GM12878 (cell line): ENCODE measurements at regions of chr14 and their contacts with region 1.

Region 1: DNA sequence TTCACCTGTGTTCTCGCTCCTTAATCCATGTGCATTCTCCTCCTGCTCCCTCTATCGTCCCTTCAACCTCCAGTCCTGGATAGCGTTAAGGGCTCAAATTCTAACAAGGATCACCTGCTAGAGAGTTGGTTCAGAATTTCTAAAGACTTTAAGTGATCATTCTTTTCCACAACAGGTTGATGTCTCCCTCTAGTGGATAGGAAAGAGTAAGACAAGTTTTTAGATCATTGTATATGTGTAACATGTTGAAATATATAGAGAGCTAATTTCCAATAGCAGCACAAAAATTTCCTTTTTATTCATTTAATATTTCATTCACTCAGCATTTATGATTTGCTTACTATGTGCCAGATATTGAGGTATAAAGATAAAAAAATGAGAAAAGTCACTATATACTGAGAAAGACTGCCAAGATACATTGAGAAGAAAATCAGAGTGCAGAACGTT is 9.3 kb upstream of the ESR2 start:
- DNase-seq: peak; percentile 28
- ATAC-seq: peak; percentile 93
- H3K4me3 ChIP-seq: no peak overlapping the region
- H3K27ac ChIP-seq: no peak overlapping the region
- H3K4me1 ChIP-seq: no peaks in the 10 kb centered on the region
- H3K27me3 ChIP-seq: no peaks in the 10 kb centered on the region
- CTCF ChIP-seq: peak; percentile 66 to 72 (median 67)
- EP300 ChIP-seq: no peak
- POLR2A ChIP-seq: no peak
- RAD21 ChIP-seq: peak; percentile 88

Region 2: GRCh38 chr14:63795532-63795931 is 508.0 kb before region 1 on chr14:
- CTCF ChIA-PET with region 1: interaction called, 74 read pairs
- POLR2A ChIA-PET with region 1: interaction called, 3 read pairs
- RAD21 ChIA-PET with region 1: interaction called, 13 read pairs
- SMC1A ChIA-PET with region 1: interaction called, 22 read pairs
- in situ Hi-C with region 1: loop called (anchors 5 kb)
- intact Hi-C with region 1: loop called (anchors 2 kb)
- DNase-seq: no peak
- ATAC-seq: peak; percentile 87
- H3K4me3 ChIP-seq: no peak overlapping the region
- H3K27ac ChIP-seq: no peak overlapping the region
- H3K4me1 ChIP-seq: no peaks in the 10 kb centered on the region
- H3K27me3 ChIP-seq: no peaks in the 10 kb centered on the region
- CTCF ChIP-seq: no peak
- EP300 ChIP-seq: peak in 1 of 2 experiments; percentile 30; a peak in 1 of 4 replicates
- POLR2A ChIP-seq: no peak
- RAD21 ChIP-seq: no peak

Region 3: DNA sequence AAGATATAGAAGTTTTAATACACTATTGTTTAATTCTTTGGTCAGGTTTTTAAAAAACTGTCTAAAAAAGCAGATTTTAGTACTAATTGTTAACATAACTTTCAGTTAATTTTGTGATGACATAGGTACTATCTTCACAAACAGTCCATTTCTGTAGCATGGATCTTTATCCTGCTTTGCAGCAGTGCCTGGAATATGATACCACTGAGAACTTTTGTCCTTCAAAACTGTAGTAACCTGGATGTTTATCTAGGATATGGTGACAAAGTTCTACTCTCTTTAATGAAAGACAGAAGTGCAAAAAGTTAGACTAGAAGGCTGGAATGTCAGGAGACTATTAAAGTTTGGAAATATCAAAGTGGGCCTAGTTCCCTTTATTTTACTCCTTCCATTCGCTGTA is 290.8 kb before region 1 on chr14:
- CTCF ChIA-PET with region 1: interaction called, 45 read pairs
- POLR2A ChIA-PET with region 1: no interaction called
- RAD21 ChIA-PET with region 1: interaction called, 34 read pairs
- SMC1A ChIA-PET with region 1: interaction called, 19 read pairs
- in situ Hi-C with region 1: no loop called
- intact Hi-C with region 1: loop called (anchors 5 kb)
- DNase-seq: no peak
- ATAC-seq: no peak
- H3K4me3 ChIP-seq: no peak overlapping the region
- H3K27ac ChIP-seq: no peak overlapping the region
- H3K4me1 ChIP-seq: no peaks in the 10 kb centered on the region
- H3K27me3 ChIP-seq: no peaks in the 10 kb centered on the region
- CTCF ChIP-seq: no peak
- EP300 ChIP-seq: no peak
- POLR2A ChIP-seq: no peak
- RAD21 ChIP-seq: no peak

Region 4: DNA sequence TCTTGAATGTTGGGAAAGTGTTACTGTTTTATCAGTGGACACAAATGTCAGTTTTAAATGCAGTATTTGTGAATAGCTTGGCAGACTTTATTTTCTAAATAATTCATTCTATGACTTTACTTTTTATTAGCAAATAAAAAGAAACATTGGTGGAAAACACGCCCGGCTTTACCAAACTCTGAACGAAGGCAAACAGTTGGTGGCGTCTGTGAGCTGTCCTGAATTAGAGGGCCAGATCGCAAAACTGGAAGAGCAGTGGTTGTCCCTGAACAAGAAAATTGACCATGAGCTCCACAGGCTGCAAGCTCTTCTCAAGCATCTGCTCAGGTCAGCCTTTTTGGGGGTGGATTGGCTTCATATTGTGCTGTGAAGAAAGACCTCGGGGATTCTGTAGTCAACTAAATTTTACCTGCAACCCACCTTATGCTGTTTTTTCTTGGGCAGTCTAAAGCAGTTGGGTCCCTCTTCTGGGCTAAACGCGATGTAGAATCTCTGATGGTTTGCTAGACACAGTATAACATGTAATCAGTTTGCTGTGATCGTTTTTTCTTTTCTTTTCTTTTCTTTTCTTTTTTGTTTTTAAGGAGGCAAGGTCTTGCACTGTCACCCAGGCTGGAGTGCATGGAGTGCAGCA is 165.7 kb before region 1 on chr14:
- CTCF ChIA-PET with region 1: interaction called, 93 read pairs
- POLR2A ChIA-PET with region 1: no interaction called
- RAD21 ChIA-PET with region 1: interaction called, 31 read pairs
- SMC1A ChIA-PET with region 1: interaction called, 24 read pairs
- in situ Hi-C with region 1: no loop called
- intact Hi-C with region 1: no loop called
- DNase-seq: no peak
- ATAC-seq: peak; percentile 36; the same call in 1 of the 3 replicates
- H3K4me3 ChIP-seq: no peak overlapping the region
- H3K27ac ChIP-seq: no peak overlapping the region
- H3K4me1 ChIP-seq: no peaks in the 10 kb centered on the region
- H3K27me3 ChIP-seq: no peaks in the 10 kb centered on the region
- CTCF ChIP-seq: peak; percentile 22 to 37 (median 32); a peak in 3 of 6 replicates
- EP300 ChIP-seq: no peak
- POLR2A ChIP-seq: no peak
- RAD21 ChIP-seq: peak; percentile 51

Region 5: GRCh38 chr14:64289571-64289970 is 13.9 kb before region 1 on chr14:
- CTCF ChIA-PET with region 1: interaction called, 57 read pairs
- POLR2A ChIA-PET with region 1: no interaction called
- RAD21 ChIA-PET with region 1: interaction called, 25 read pairs
- SMC1A ChIA-PET with region 1: interaction called, 22 read pairs
- in situ Hi-C with region 1: no loop called
- intact Hi-C with region 1: no loop called
- DNase-seq: no peak
- ATAC-seq: no peak
- H3K4me3 ChIP-seq: no peak overlapping the region
- H3K27ac ChIP-seq: no peak overlapping the region
- H3K4me1 ChIP-seq: peaks cover 8% of the 10 kb centered on the region
- H3K27me3 ChIP-seq: no peaks in the 10 kb centered on the region
- CTCF ChIP-seq: no peak
- EP300 ChIP-seq: no peak
- POLR2A ChIP-seq: no peak
- RAD21 ChIP-seq: no peak